OCI-LY7 (cell line): ENCODE measurements at regions of chr7 and their contacts with region 1.

Region 1: DNA sequence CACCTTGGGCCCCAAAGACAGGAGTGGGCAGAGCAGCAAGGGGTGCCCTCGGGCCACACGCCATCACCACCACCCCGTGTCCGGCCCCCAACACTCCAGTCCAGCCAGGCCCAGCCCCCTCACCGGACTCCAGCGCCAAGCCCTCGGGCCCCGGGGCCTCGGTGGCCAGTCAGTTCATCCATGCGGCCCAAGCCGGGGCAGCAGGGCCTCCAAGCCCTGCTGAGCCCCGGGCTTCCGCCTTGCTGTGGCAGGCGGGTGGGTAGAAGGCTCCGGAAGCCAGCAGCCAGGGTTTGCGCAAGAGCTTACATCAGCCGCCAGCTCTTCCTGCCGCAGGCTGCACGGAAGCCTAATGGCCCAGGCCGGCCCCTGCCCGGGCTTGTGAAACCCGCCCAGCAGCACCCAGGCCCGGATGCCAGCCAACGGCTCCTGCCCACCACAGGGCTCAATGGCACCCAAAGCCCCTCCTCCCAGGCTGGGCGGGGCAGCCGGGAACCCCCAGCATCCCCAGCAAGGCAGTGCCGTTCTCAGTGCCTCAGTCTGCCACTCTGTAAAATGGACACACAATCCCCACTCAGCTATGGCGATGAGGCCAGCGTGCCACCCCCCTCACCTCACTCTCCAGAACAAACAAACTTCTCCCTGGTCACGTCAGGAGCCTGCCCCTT is 26.5 kb downstream of the TNRC18 start:
- DNase-seq: peak; percentile 96
- H3K4me3 ChIP-seq: peak overlapping the region; percentile 83
- H3K27ac ChIP-seq: peak overlapping the region; percentile 70
- H3K4me1 ChIP-seq: peaks cover 15% of the 10 kb centered on the region
- CTCF ChIP-seq: no peak

Region 2: GRCh38 chr7:5333121-5334045 is 63.7 kb before region 1 on chr7:
- CTCF ChIA-PET with region 1: no interaction called
- POLR2A ChIA-PET with region 1: no interaction called
- intact Hi-C with region 1: loop called (anchors 5 kb)
- DNase-seq: no peak
- H3K4me3 ChIP-seq: no peak overlapping the region
- H3K27ac ChIP-seq: no peak overlapping the region
- H3K4me1 ChIP-seq: peaks cover 21% of the 10 kb centered on the region
- CTCF ChIP-seq: no peak

Region 3: GRCh38 chr7:5423844-5424688 is 26.9 kb after region 1 on chr7:
- CTCF ChIA-PET with region 1: interaction called, 3 read pairs
- POLR2A ChIA-PET with region 1: interaction called, 6 read pairs
- intact Hi-C with region 1: loop called (anchors 1 kb)
- DNase-seq: peak; percentile 87
- H3K4me3 ChIP-seq: peak overlapping the region; percentile 81
- H3K27ac ChIP-seq: no peak overlapping the region
- H3K4me1 ChIP-seq: peaks cover 27% of the 10 kb centered on the region
- CTCF ChIP-seq: no peak

Region 4: GRCh38 chr7:5435289-5436002 is 38.3 kb after region 1 on chr7:
- CTCF ChIA-PET with region 1: no interaction called
- POLR2A ChIA-PET with region 1: interaction called, 3 read pairs
- intact Hi-C with region 1: loop called (anchors 1 kb)
- DNase-seq: peak; percentile 87
- H3K4me3 ChIP-seq: peak overlapping the region; percentile 37
- H3K27ac ChIP-seq: peak overlapping the region; percentile 71
- H3K4me1 ChIP-seq: peaks cover 22% of the 10 kb centered on the region
- CTCF ChIP-seq: no peak

Region 5: DNA sequence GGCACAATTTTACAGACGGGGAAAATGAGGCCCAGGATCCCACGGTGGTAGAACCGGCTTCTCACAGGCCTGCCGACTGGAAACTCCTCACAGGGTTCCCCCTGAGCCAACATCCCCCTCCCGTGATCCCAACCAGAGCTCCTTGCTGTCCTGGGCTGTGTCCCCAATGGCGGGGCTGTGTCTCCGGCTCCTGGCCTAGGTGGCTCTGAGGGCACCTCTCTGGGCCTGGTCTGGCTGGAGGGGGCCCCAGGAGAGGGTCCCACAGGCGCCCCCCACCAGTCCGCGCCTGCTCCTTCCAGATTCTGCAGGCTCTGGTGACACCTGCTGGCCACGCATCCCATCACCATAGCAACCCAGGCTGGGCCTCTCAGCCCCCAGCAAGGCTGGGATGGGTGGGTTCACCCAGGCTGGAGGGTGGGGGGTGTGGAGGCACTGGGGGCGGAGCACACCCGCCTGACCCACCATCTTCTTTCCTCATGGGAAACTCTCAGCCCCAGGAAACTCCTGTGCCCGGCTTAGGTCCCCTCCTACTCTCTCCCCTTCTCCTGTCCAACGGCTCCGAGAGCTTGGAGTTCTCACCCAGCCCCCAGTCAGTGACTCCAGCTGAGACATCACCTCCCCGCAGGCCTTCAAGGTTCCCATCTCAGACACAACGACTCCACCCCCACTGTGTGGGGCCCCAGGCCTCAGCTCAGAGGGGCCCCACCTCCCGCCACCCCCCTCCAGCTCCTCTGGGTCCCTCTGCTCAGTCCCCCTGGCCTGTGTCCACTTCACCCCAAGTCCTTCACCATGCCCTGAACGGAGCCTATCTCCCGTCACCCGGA is 53.6 kb after region 1 on chr7:
- CTCF ChIA-PET with region 1: interaction called, 5 read pairs
- POLR2A ChIA-PET with region 1: interaction called, 4 read pairs
- intact Hi-C with region 1: loop called (anchors 1 kb)
- DNase-seq: peak; percentile 67
- H3K4me3 ChIP-seq: no peak overlapping the region
- H3K27ac ChIP-seq: no peak overlapping the region
- H3K4me1 ChIP-seq: no peaks in the 10 kb centered on the region
- CTCF ChIP-seq: peak; percentile 81

Region 6: GRCh38 chr7:5514440-5515035 is 117.4 kb after region 1 on chr7:
- CTCF ChIA-PET with region 1: no interaction called
- POLR2A ChIA-PET with region 1: no interaction called
- intact Hi-C with region 1: no loop called
- DNase-seq: no peak
- H3K4me3 ChIP-seq: peak overlapping the region; percentile 99
- H3K27ac ChIP-seq: no peak overlapping the region
- H3K4me1 ChIP-seq: peaks cover 25% of the 10 kb centered on the region
- CTCF ChIP-seq: no peak

Region 7: DNA sequence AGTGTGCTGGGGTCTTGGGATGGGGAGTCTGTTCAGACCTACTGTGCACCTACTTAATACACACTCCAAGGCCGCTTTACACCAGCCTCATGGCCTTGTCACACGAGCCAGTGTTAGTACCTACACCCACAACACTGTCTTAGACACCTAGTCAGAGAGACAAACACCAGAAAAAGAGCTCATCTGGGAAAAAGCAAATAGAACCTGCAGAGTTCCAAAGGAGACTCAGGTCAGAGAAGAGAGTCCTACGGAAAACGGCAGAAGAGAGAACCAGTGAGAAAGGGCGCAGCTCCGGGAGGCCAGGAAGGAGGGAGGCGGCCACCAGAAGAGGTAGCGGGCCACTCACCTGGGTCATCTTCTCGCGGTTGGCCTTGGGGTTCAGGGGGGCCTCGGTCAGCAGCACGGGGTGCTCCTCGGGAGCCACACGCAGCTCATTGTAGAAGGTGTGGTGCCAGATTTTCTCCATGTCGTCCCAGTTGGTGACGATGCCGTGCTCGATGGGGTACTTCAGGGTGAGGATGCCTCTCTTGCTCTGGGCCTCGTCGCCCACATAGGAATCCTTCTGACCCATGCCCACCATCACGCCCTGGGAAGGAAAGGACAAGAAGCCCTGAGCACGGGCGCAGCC is 131.8 kb after region 1 on chr7:
- CTCF ChIA-PET with region 1: no interaction called
- POLR2A ChIA-PET with region 1: no interaction called
- intact Hi-C with region 1: no loop called
- DNase-seq: no peak
- H3K4me3 ChIP-seq: peak overlapping the region; percentile 78
- H3K27ac ChIP-seq: peak overlapping the region; percentile 97
- H3K4me1 ChIP-seq: peaks cover 42% of the 10 kb centered on the region
- CTCF ChIP-seq: no peak